K562 (cell line): ENCODE measurements at regions of chr4 and their contacts with region 1.

Region 1: GRCh38 chr4:177250056-177250696 is 59.5 kb upstream of the NEIL3 start:
- DNase-seq: peak; percentile 57 to 80 (median 62)
- ATAC-seq: peak; percentile 97
- H3K4me3 ChIP-seq: no peak overlapping the region
- H3K27ac ChIP-seq: no peak overlapping the region
- H3K4me1 ChIP-seq: no peaks in the 10 kb centered on the region
- H3K27me3 ChIP-seq: no peaks in the 10 kb centered on the region
- CTCF ChIP-seq: peak; percentile 91 to 97 (median 93)
- EP300 ChIP-seq: no peak
- POLR2A ChIP-seq: no peak
- RAD21 ChIP-seq: peak; percentile 86 to 92

Region 2: GRCh38 chr4:176377780-176378179 is 872.4 kb before region 1 on chr4:
- CTCF ChIA-PET with region 1: no interaction called
- POLR2A ChIA-PET with region 1: no interaction called
- in situ Hi-C with region 1: no loop called
- intact Hi-C with region 1: loop called (anchors 10 kb)
- DNase-seq: peak in 1 of 4 experiments; percentile 3
- ATAC-seq: peak; percentile 72
- H3K4me3 ChIP-seq: no peak overlapping the region
- H3K27ac ChIP-seq: no peak overlapping the region
- H3K4me1 ChIP-seq: no peaks in the 10 kb centered on the region
- H3K27me3 ChIP-seq: no peaks in the 10 kb centered on the region
- CTCF ChIP-seq: peak in 1 of 3 experiments; percentile 38; a peak in 2 of 6 replicates
- EP300 ChIP-seq: no peak
- POLR2A ChIP-seq: no peak
- RAD21 ChIP-seq: peak; percentile 30 to 62; a peak in 3 of 4 replicates

Region 3: DNA sequence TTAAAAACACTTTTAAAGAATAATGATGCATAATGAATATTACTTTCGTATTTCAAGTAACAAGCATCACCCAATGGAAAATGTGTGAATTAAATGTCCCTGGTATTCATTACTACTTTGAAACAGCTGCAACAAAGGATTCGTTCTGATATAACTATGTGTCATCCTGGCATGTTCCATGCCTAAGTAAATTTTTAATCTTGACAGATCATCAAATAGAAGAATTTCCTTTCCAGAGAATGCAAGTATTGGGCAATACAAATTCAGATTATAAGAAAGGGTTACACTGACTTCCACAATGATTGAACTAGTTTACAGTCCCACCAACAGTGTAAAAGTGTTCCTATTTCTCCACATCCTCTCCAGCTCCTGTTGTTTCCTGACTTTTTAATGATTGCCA is 825.1 kb before region 1 on chr4:
- CTCF ChIA-PET with region 1: no interaction called
- POLR2A ChIA-PET with region 1: no interaction called
- in situ Hi-C with region 1: no loop called
- intact Hi-C with region 1: no loop called
- DNase-seq: no peak
- ATAC-seq: no peak
- H3K4me3 ChIP-seq: no peak overlapping the region
- H3K27ac ChIP-seq: no peak overlapping the region
- H3K4me1 ChIP-seq: no peaks in the 10 kb centered on the region
- H3K27me3 ChIP-seq: no peaks in the 10 kb centered on the region
- CTCF ChIP-seq: no peak
- EP300 ChIP-seq: no peak
- POLR2A ChIP-seq: no peak
- RAD21 ChIP-seq: no peak

Region 4: DNA sequence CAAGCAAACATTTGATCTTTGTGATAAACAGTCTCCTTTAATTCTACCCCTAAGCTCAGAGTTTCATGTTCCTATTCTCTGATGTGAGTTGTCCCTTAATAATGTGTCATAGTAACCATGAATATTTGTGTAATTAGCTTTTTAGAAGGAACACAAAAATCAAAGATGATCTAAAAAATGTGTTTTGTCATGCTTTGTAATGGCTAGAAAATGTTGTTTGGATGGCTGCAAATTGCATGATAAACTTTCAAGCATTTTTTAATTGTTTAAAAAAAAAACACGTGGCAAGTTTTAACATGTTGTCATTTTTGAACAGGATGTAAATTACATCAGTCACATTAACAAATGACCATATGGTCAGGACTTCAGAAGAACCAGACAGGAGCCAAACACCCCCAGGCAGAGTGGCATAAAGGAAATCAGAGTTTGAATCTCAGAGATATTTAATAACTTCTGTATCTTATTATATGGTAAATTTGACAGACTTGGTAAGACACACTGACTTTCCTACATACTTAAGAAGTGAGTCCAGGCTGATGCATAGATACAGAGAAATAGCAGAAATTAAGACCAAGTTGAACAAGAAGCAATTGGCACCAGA is 233.5 kb before region 1 on chr4:
- CTCF ChIA-PET with region 1: no interaction called
- POLR2A ChIA-PET with region 1: no interaction called
- in situ Hi-C with region 1: no loop called
- intact Hi-C with region 1: no loop called
- DNase-seq: no peak
- ATAC-seq: no peak
- H3K4me3 ChIP-seq: no peak overlapping the region
- H3K27ac ChIP-seq: no peak overlapping the region
- H3K4me1 ChIP-seq: no peaks in the 10 kb centered on the region
- H3K27me3 ChIP-seq: no peaks in the 10 kb centered on the region
- CTCF ChIP-seq: no peak
- EP300 ChIP-seq: no peak
- POLR2A ChIP-seq: no peak
- RAD21 ChIP-seq: no peak

Region 5: DNA sequence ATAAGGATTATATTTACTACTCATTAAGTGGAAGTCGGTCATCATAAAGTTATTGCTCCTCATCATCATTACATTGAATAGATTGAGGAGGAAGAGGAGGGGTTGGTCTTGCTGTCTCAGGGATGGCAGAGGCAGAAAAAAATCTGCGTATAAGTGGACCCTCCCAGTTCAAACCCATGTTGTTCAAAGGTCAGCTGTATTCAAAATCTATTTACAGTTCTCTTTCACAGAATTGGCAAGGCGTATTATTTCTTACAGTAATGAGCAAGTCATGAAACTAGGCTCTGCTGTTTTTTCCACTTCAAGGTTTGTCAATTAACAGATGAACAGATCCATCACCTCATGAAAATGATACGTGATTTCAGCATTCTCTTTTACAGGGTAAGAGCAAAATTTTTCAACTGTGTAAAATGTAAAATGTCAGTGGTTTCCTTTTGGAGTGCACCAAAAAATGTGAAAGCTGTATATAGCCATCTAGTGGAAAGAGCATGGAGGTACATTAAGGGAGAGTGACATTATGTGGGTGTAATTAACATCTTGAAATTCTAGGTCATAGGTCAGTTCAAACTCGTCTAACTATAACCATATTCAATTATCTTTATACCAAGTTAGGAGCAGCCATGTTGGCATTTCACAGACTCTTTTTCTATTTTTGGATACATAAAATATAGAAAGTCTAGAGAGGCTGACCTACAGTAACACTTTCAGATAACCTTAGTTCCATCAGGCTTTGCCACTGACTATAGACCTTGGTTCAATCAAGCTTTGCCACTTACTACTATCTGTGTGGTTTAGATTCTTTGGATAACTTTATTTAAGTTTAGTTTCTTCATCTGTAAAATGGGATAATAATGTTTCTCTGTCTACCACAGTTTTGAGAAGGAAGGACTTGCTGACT is 89.5 kb after region 1 on chr4:
- CTCF ChIA-PET with region 1: interaction called, 13 read pairs
- POLR2A ChIA-PET with region 1: no interaction called
- in situ Hi-C with region 1: no loop called
- intact Hi-C with region 1: loop called (anchors 1 kb)
- DNase-seq: peak in 3 of 4 experiments; percentile 10 to 26 (median 15)
- ATAC-seq: peak; percentile 92
- H3K4me3 ChIP-seq: no peak overlapping the region
- H3K27ac ChIP-seq: no peak overlapping the region
- H3K4me1 ChIP-seq: no peaks in the 10 kb centered on the region
- H3K27me3 ChIP-seq: no peaks in the 10 kb centered on the region
- CTCF ChIP-seq: peak; percentile 32 to 70 (median 42); a peak in 4 of 6 replicates
- EP300 ChIP-seq: no peak
- POLR2A ChIP-seq: no peak
- RAD21 ChIP-seq: peak; percentile 65 to 71

Region 6: GRCh38 chr4:177380730-177381287 is 130.6 kb after region 1 on chr4:
- CTCF ChIA-PET with region 1: no interaction called
- POLR2A ChIA-PET with region 1: no interaction called
- in situ Hi-C with region 1: no loop called
- intact Hi-C with region 1: loop called (anchors 2 kb)
- DNase-seq: peak; percentile 17 to 50 (median 22)
- ATAC-seq: peak; percentile 98
- H3K4me3 ChIP-seq: no peak overlapping the region
- H3K27ac ChIP-seq: no peak overlapping the region
- H3K4me1 ChIP-seq: peaks cover 0 to 9% of the 10 kb centered on the region in 2 experiments; a peak in 2 of 5 replicates
- H3K27me3 ChIP-seq: no peaks in the 10 kb centered on the region
- CTCF ChIP-seq: peak; percentile 40 to 59 (median 55)
- EP300 ChIP-seq: no peak
- POLR2A ChIP-seq: no peak
- RAD21 ChIP-seq: peak in 1 of 2 experiments; percentile 53; a peak in 2 of 4 replicates

Region 7: GRCh38 chr4:177441803-177442622 is 191.8 kb after region 1 on chr4 and contains the start of gene AGA:
- CTCF ChIA-PET with region 1: no interaction called
- POLR2A ChIA-PET with region 1: interaction called, 4 read pairs
- in situ Hi-C with region 1: no loop called
- intact Hi-C with region 1: loop called (anchors 10 kb)
- DNase-seq: peak; percentile 93 to 97 (median 94)
- ATAC-seq: peak; percentile 98
- H3K4me3 ChIP-seq: peak within 1 kb of the TSS; percentile 51
- H3K27ac ChIP-seq: peak within 1 kb of the TSS; percentile 92
- H3K4me1 ChIP-seq: peaks cover 4 to 12% of the 10 kb centered on the region in 2 experiments; a peak in 4 of 5 replicates
- H3K27me3 ChIP-seq: no peaks in the 10 kb centered on the region
- CTCF ChIP-seq: 0 out of 6 replicates have a peak, but pooled peaks of 1 of the 3 experiments have one; percentile 1
- EP300 ChIP-seq: no peak; the same call in 1 of the 2 replicates
- POLR2A ChIP-seq: peak; percentile 95
- RAD21 ChIP-seq: no peak
- polyA plus RNA-seq, gene AGA: 16.6 to 18.1 TPM

Region 8: DNA sequence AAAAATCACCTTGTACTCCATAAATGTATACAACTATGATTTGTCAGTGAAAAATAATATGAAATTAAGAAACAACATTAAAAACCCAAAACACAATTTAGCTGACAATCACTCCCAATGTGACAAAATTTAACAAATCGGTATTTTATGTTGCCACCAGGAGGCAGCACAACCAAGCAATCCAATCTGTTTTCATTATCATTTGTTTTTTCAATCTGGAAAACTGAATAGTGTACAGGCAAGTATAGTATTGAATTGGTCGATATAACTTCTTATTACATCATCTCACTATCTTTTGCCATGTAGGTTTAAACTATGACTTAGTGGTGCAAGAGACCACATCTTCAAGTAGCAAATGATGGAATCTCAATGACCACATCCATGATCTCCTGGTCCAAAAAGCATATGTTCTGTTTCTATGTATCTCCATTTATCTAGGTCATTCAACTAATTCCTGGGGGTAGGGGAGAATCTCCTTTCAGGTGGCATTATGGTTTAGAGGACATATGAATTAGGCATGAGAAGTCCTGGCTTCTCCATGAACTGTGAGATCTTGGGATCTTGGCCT is 304.9 kb after region 1 on chr4:
- CTCF ChIA-PET with region 1: no interaction called
- POLR2A ChIA-PET with region 1: interaction called, 3 read pairs
- in situ Hi-C with region 1: no loop called
- intact Hi-C with region 1: loop called (anchors 5 kb)
- DNase-seq: peak; percentile 10 to 38 (median 20)
- ATAC-seq: no peak; the same call in 2 of the 3 replicates
- H3K4me3 ChIP-seq: no peak overlapping the region
- H3K27ac ChIP-seq: no peak overlapping the region
- H3K4me1 ChIP-seq: peaks cover 0 to 3% of the 10 kb centered on the region in 2 experiments; a peak in 1 of 5 replicates
- H3K27me3 ChIP-seq: no peaks in the 10 kb centered on the region
- CTCF ChIP-seq: peak; percentile 22 to 65 (median 54); a peak in 5 of 6 replicates
- EP300 ChIP-seq: no peak
- POLR2A ChIP-seq: no peak
- RAD21 ChIP-seq: peak; percentile 66 to 79